Activated naive CD4-positive, alpha-beta T cell treated with anti-CD3 and anti-CD28 coated beads for 36 hours (primary cell): ENCODE measurements at regions of chr12 and their contacts with region 1.

Region 1: GRCh38 chr12:27179400-27180214 is 64.5 kb upstream of the STK38L start:
- DNase-seq: peak; percentile 69
- H3K4me3 Mint-ChIP-seq: no peak overlapping the region
- H3K27ac Mint-ChIP-seq: peak overlapping the region; percentile 76
- H3K4me1 Mint-ChIP-seq: peaks cover 38% of the 10 kb centered on the region
- H3K27me3 Mint-ChIP-seq: peaks cover 2% of the 10 kb centered on the region

Region 2: GRCh38 chr12:26870491-26871419 is 308.9 kb before region 1 on chr12:
- CTCF ChIA-PET with region 1: no interaction called
- intact Hi-C with region 1: loop called (anchors 5 kb)
- DNase-seq: no peak
- H3K4me3 Mint-ChIP-seq: no peak overlapping the region
- H3K27ac Mint-ChIP-seq: no peak overlapping the region
- H3K4me1 Mint-ChIP-seq: peaks cover 13% of the 10 kb centered on the region
- H3K27me3 Mint-ChIP-seq: peaks cover 16% of the 10 kb centered on the region

Region 3: DNA sequence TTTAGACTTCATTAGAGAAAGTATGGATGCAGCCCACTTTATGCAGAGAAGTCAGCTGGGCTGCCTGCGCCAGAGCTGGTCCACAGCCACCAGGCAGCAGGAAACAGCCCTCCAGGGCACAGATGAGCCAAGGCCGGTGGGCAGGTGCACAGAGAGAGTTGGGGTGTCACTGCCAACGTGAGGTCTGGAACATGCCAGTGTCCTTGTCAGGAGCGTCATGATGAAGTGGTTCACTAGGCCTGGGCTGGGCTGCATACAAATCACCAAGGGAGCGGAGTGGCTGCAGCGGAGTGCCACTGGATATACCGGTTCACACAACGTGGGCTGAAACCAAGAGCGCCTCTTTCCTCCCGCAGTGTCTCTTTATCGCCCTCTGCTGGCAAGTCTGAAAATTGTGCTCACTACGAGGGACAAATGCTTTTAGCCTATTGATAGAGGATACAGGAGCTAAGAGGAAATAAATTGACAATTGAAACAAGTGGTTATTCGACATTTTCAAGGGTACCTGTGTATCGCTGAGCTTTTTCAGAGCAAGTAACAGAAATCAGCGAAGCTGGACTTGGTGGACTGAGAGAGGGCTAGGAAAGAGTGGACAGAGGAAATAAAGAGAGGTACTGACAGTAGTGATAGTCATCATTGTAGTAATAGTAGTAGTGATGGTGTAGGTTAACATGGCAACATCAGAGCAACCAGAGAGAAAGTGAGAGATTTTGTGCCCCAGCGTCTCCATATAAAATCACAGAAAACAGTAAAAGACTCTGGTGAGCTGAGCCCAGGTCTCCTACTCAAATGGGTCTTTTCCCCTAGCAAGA is 294.6 kb before region 1 on chr12:
- CTCF ChIA-PET with region 1: no interaction called
- intact Hi-C with region 1: no loop called
- DNase-seq: peak; percentile 92
- H3K4me3 Mint-ChIP-seq: peak overlapping the region; percentile 58
- H3K27ac Mint-ChIP-seq: no peak overlapping the region
- H3K4me1 Mint-ChIP-seq: peaks cover 6% of the 10 kb centered on the region
- H3K27me3 Mint-ChIP-seq: peaks cover 10% of the 10 kb centered on the region

Region 4: DNA sequence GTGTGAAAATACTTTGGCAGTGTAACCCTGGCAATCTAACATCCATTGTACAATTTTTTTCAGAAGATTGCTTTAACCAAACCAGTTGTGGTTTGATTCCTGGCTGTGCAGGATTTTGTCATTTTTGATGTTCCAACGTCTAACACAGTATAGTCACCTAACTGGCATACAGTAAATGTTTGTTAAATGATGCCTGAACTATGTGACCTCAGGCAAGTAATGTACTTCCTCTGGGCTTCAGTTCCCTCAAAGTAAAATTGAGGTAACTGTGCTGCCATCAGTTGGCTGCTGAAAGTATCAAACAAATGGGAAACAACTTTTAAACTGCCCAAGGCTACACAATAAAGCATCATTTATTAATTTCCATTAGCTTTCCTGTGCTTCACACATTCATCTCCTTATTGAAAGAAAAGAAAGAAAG is 169.7 kb before region 1 on chr12:
- CTCF ChIA-PET with region 1: no interaction called
- intact Hi-C with region 1: no loop called
- DNase-seq: no peak
- H3K4me3 Mint-ChIP-seq: no peak overlapping the region
- H3K27ac Mint-ChIP-seq: no peak overlapping the region
- H3K4me1 Mint-ChIP-seq: peaks cover 48% of the 10 kb centered on the region
- H3K27me3 Mint-ChIP-seq: no peaks in the 10 kb centered on the region

Region 5: GRCh38 chr12:27142101-27142721 is 37.4 kb before region 1 on chr12:
- CTCF ChIA-PET with region 1: interaction called, 4 read pairs
- intact Hi-C with region 1: loop called (anchors 2 kb)
- DNase-seq: peak; percentile 61
- H3K4me3 Mint-ChIP-seq: no peak overlapping the region
- H3K27ac Mint-ChIP-seq: no peak overlapping the region
- H3K4me1 Mint-ChIP-seq: peaks cover 10% of the 10 kb centered on the region
- H3K27me3 Mint-ChIP-seq: no peaks in the 10 kb centered on the region

Region 6: GRCh38 chr12:27220057-27220987 is 40.7 kb after region 1 on chr12:
- CTCF ChIA-PET with region 1: no interaction called
- intact Hi-C with region 1: loop called (anchors 5 kb)
- DNase-seq: peak; percentile 21
- H3K4me3 Mint-ChIP-seq: no peak overlapping the region
- H3K27ac Mint-ChIP-seq: peak overlapping the region; percentile 68
- H3K4me1 Mint-ChIP-seq: peaks cover 17% of the 10 kb centered on the region
- H3K27me3 Mint-ChIP-seq: no peaks in the 10 kb centered on the region

Region 7: DNA sequence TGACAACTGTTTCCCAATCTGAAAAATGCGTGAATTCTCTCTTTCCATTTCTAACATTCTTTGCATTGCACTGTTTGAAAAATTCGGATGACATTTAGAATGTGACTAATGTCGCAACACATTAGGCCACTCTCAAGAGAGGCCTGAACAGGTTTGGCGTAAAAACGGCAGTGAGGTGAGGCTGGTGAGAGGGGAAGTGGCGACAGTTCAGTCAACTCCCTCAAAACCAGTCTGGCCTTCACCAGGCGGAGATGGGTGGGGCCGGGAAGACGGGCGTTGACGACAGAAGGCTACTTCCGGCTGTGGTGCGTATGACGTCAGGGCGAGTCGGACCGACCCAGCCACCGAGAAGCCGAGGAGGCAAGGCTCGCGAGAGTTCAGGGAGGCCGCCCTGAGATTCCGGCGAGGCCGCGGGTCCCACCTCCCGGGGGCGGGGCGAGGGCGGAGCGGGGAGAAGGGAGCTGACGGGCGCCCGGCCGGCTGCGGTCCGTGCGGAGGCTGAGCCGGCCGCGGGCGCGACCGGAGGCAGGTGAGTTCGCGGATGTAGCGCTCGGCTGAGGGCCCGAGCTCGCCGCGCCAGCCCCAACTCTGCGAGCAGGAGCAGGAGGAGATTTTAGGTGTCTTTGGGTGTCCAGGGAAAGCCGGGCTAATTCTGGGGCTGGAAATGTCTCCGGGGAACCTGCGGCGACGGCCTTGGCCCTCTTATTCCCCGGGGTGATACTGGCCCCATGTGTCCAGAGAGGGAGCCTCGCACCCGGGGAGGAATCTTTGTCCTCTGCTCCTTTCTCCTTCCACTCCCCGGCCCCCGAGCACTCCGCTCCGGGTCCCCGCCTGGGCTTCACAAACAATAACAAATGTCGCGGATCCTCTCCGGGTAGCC is 64.4 kb after region 1 on chr12 and contains the start of gene STK38L:
- CTCF ChIA-PET with region 1: no interaction called
- intact Hi-C with region 1: loop called (anchors 1 kb)
- DNase-seq: peak; percentile 98
- H3K4me3 Mint-ChIP-seq: peak within 1 kb of the TSS; percentile 98
- H3K27ac Mint-ChIP-seq: peak within 1 kb of the TSS; percentile 91
- H3K4me1 Mint-ChIP-seq: peaks cover 47% of the 10 kb centered on the region
- H3K27me3 Mint-ChIP-seq: no peaks in the 10 kb centered on the region
- total RNA-seq, gene STK38L: 21.3 to 21.4 TPM

Region 8: DNA sequence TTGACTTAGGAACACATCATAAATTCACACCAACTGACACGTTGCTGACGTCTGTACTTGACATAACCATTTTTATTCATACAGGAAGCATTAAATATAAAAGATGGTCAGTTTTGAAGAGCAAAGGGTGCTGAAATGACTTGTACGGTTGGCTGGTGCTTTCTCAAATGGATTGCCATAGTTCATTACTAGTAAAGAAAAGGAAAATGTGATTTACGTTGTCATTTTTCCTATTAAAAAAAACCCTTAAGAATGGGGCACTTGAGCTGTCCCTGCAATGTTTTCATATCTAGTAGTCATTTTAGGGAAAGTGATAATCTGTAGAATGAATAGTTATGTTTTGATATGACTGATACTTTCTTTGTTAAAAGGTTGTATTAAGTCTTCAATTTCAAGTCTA is 622.9 kb after region 1 on chr12:
- CTCF ChIA-PET with region 1: no interaction called
- intact Hi-C with region 1: loop called (anchors 5 kb)
- DNase-seq: peak; percentile 49
- H3K4me3 Mint-ChIP-seq: no peak overlapping the region
- H3K27ac Mint-ChIP-seq: peak overlapping the region; percentile 85
- H3K4me1 Mint-ChIP-seq: peaks cover 59% of the 10 kb centered on the region
- H3K27me3 Mint-ChIP-seq: peaks cover 4% of the 10 kb centered on the region